GM18951 (cell line): ENCODE measurements at regions of chr1 and their contacts with region 1.

Region 1: DNA sequence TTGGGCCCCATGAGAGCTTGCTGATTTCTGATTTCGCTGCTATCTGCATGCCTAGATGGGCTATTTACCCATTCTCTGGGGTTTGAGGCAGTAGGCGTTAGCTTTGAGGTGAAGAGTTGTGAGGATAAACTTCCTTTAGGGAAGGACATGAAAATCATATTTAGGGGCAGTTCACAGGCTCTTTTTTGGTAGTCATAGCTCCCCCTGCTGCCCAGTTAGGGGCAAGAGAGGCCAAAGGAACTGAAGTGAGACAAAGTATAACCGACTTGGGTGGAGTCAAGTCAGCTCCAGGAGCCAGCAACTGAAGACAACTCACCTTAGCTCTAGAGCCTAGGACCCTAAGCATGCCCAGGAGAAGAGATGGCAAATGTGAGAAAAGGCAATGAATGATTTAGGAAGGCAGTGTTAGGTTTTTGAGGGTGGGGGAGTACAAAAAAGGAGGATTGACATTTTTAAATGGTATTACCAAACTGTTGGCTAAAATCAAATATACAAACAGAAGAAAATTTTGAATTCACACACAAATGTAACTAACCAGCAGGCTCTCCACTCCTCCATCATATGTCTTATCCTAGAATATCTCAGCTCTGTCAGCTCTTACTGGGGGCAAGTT is 625.2 kb downstream of the LMO4 start:
- POLR2A ChIP-seq: no peak

Region 2: DNA sequence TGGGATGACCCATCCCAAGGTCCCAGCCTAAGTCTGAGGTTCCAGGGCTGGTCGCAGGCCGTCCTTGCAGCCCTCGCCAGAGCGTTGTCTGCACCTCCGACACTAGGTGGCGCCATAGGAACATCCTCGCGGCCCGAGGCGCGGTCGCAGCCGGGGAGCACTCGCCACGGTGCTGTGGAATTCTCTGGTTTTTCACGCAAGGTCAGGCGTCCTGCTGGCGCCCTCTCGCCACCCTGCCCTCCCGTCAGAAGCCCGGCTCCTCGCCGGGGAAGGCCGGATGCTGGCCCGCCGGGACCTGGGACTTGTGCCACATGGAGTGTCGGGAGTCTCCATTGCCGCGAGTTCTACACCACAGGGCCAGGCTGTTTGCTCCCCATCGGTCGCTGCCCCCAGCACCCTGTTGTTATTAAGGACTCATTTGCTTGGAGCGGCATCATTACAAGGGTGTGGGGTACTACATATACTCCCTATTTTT is 822.0 kb before region 1 on chr1:
- in situ Hi-C with region 1: loop called (anchors 25 kb)
- POLR2A ChIP-seq: no peak

Region 3: DNA sequence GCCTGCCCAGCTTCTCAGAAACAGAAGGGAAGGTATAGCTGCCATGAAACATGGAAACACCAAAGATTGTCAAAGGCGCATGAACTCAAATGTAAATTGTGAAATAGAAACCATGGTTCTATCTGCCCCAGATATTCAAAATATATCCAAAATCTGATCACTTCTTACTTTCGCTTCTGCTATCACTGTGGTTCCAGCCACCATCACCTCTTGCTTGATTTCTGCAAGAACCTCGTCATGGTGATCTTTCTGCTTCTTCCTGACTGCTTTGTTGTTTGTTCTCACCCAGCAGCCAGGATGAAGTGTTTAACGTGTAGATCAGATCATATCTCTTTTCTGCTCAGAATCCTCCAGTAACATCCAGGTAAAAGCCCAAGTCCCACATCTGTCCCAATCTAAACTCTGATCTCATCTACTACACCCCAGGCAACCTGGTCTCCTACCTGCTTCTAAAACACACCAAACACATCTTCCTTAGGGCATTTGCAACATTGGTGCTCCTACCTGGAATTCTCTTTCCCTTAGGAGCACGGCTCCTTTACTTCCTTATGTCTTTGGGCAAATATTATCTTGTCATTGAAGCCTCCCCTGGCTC is 635.7 kb before region 1 on chr1:
- in situ Hi-C with region 1: loop called (anchors 25 kb)
- POLR2A ChIP-seq: no peak